Activated naive CD4-positive, alpha-beta T cell treated with anti-CD3 and anti-CD28 coated beads for 36 hours (primary cell): ENCODE measurements at regions of chr20 and their contacts with region 1.

Region 1: GRCh38 chr20:956330-956951 is 40.3 kb upstream of the ANGPT4 start:
- DNase-seq: peak; percentile 82
- H3K4me3 Mint-ChIP-seq: no peak overlapping the region
- H3K27ac Mint-ChIP-seq: no peak overlapping the region
- H3K4me1 Mint-ChIP-seq: peaks cover 2% of the 10 kb centered on the region
- H3K27me3 Mint-ChIP-seq: peaks cover 23% of the 10 kb centered on the region

Region 2: GRCh38 chr20:667391-667964 is 289.0 kb before region 1 on chr20:
- CTCF ChIA-PET with region 1: no interaction called
- intact Hi-C with region 1: no loop called
- DNase-seq: peak; percentile 76
- H3K4me3 Mint-ChIP-seq: no peak overlapping the region
- H3K27ac Mint-ChIP-seq: no peak overlapping the region
- H3K4me1 Mint-ChIP-seq: peaks cover 4% of the 10 kb centered on the region
- H3K27me3 Mint-ChIP-seq: peaks cover 61% of the 10 kb centered on the region

Region 3: GRCh38 chr20:805713-806112 is 150.7 kb before region 1 on chr20:
- CTCF ChIA-PET with region 1: interaction called, 12 read pairs
- intact Hi-C with region 1: no loop called
- DNase-seq: no peak
- H3K4me3 Mint-ChIP-seq: no peak overlapping the region
- H3K27ac Mint-ChIP-seq: no peak overlapping the region
- H3K4me1 Mint-ChIP-seq: no peaks in the 10 kb centered on the region
- H3K27me3 Mint-ChIP-seq: peaks cover 6% of the 10 kb centered on the region

Region 4: DNA sequence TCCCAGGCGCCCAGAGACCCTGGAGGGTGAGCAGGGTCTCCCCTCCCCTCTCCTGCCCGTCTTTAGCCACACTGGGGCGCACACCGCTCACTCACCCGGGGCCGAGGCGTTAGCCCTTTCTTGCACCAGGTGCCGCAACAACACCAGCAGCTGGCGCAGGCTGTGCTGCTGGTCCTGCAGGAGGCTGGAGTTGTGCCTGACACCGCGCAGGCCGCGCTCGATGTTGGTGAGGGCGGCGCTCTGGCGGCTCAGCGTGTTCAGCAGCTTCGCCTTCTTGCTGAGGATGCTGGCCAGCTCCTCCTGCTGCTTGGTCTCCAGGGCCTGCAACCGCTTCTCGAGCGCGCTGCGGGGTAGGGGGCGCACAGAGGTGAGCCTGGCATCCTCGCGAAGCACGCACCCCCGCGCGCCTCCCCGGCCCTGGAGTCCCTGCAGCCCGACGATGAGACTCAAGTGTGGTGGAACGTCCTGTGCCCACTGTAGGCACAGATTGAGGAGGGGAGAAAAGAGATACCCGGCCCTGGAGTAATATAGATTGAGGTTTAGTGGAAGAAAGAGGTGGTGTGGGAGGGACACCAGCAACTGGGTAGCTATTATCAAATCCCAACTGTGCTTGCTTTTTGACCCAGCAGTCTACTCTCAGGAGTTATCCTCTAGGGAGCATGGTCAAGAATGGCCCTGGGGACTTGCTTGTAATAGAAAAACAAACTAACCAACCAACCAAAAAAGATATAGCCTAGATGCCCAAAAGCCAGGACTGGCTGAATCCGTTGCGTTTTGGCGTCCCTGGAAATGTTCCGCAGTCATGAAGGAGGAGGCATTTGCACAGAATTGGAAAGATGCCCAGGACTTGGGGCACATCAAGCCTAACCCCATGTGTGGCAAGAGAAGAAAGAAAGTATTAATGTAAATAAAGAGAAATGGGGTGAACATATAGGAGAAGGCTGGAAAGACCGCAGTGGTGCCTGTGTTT is 71.2 kb before region 1 on chr20:
- CTCF ChIA-PET with region 1: interaction called, 8 read pairs
- intact Hi-C with region 1: loop called (anchors 10 kb)
- DNase-seq: peak; percentile 32
- H3K4me3 Mint-ChIP-seq: no peak overlapping the region
- H3K27ac Mint-ChIP-seq: no peak overlapping the region
- H3K4me1 Mint-ChIP-seq: peaks cover 13% of the 10 kb centered on the region
- H3K27me3 Mint-ChIP-seq: peaks cover 14% of the 10 kb centered on the region

Region 5: GRCh38 chr20:973785-974194 is 17.3 kb after region 1 on chr20:
- CTCF ChIA-PET with region 1: interaction called, 27 read pairs
- intact Hi-C with region 1: no loop called
- DNase-seq: peak; percentile 70
- H3K4me3 Mint-ChIP-seq: no peak overlapping the region
- H3K27ac Mint-ChIP-seq: no peak overlapping the region
- H3K4me1 Mint-ChIP-seq: peaks cover 3% of the 10 kb centered on the region
- H3K27me3 Mint-ChIP-seq: no peaks in the 10 kb centered on the region

Region 6: DNA sequence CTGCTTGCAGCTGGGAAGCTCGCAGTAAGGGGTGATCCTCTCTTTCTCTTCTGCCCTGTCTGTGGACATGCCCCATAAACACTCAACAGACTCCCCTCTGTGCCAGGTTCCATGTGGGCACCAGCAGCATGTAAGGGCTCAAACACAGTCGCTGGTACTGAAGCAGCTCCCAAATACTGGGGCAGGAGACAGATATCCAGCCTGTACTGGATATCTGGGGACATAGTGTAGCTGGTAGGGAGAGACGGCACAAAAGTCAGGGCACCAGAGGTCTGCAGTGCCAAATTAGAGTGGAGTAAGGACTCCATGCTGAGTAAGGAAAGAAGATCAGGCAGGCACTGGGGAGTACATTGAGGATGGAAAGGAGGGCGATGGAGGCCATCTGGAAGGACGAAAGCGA is 94.0 kb after region 1 on chr20:
- CTCF ChIA-PET with region 1: no interaction called
- intact Hi-C with region 1: no loop called
- DNase-seq: no peak
- H3K4me3 Mint-ChIP-seq: no peak overlapping the region
- H3K27ac Mint-ChIP-seq: no peak overlapping the region
- H3K4me1 Mint-ChIP-seq: no peaks in the 10 kb centered on the region
- H3K27me3 Mint-ChIP-seq: no peaks in the 10 kb centered on the region

Region 7: DNA sequence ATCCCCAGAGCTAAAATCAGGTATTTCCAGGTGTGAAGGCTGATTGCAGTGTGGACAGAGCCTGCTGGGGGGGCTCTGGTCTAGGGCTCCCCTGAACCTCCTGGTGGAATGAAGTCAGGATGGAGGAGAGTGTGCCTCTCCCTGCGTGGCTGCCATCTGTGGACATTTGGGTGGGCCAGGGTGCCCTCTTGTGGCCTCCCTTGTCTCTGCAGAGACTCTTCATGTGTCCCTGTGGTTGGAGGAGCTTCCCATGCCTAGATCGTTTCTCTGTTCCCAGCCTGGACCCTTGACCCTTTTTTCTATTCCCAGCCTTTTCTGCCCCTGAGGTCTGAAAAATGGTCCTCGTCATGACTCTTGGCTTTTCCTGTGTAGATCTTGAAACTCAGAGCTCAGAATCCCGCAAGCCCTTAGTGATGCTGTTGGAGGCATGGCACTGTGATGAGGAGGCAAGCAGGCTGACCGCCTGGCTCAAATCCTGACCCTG is 152.0 kb after region 1 on chr20:
- CTCF ChIA-PET with region 1: interaction called, 4 read pairs
- intact Hi-C with region 1: loop called (anchors 5 kb)
- DNase-seq: peak; percentile 76
- H3K4me3 Mint-ChIP-seq: no peak overlapping the region
- H3K27ac Mint-ChIP-seq: no peak overlapping the region
- H3K4me1 Mint-ChIP-seq: peaks cover 3% of the 10 kb centered on the region
- H3K27me3 Mint-ChIP-seq: no peaks in the 10 kb centered on the region